Mammary epithelial cell (primary cell): ENCODE measurements at regions of chr9 and their contacts with region 1.

Region 1: DNA sequence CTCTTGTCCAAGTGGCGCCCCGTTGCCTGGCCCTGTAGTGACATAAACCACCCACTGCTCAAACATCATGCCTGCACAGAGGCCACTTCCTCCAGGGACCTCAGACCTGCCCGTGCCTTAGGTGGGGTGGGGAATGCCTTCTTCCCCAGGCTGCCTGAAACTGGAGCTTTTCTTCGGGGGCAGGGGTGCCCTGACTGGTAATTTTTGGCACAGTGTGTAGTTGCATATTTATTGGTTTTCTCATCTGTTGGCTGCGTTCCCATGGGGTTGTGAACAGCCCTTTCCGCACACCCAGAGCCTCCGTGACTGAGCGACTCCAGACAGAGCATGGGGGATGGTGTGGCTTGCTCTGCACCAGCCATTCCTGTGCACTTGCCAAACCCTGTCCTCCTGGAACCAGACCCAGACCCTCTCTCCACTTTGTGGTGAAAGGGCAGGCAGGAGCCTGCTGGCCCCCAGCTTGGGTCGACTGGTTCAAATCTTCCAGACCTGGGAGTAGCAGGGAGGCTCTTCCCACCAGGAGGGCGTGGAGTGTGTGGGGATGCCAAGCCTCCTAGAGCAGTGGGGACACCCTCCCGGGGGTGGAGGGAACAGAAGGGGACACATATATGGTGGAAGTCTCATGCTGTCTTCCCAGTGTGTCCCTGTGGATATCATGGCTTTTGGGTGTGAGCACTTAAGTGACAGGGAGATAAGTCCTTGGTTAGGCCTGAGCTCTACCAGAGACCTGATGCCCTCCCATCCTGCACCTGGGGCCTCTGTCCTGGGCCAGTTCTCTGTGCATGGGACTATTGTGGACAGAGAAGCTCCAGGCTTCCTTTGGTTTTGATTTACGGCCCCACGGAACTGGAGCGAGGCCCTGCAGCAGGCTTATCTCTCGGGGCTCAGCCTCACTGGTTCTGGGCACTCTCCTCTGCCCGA is 39.6 kb downstream of the WNK2 start:
- DNase-seq: peak; percentile 92
- H3K4me3 ChIP-seq: no peak overlapping the region
- H3K27ac ChIP-seq: no peak overlapping the region
- H3K4me1 ChIP-seq: peaks cover 27% of the 10 kb centered on the region
- H3K27me3 ChIP-seq: no peaks in the 10 kb centered on the region
- CTCF ChIP-seq: no peak

Region 2: GRCh38 chr9:93003552-93004407 is 219.7 kb before region 1 on chr9:
- CTCF ChIA-PET with region 1: no interaction called
- dilution Hi-C with region 1: no loop called
- in situ Hi-C with region 1: no loop called
- intact Hi-C with region 1: loop called (anchors 10 kb)
- DNase-seq: peak; percentile 42
- H3K4me3 ChIP-seq: no peak overlapping the region
- H3K27ac ChIP-seq: no peak overlapping the region
- H3K4me1 ChIP-seq: no peaks in the 10 kb centered on the region
- H3K27me3 ChIP-seq: no peaks in the 10 kb centered on the region
- CTCF ChIP-seq: peak; percentile 52 to 78

Region 3: DNA sequence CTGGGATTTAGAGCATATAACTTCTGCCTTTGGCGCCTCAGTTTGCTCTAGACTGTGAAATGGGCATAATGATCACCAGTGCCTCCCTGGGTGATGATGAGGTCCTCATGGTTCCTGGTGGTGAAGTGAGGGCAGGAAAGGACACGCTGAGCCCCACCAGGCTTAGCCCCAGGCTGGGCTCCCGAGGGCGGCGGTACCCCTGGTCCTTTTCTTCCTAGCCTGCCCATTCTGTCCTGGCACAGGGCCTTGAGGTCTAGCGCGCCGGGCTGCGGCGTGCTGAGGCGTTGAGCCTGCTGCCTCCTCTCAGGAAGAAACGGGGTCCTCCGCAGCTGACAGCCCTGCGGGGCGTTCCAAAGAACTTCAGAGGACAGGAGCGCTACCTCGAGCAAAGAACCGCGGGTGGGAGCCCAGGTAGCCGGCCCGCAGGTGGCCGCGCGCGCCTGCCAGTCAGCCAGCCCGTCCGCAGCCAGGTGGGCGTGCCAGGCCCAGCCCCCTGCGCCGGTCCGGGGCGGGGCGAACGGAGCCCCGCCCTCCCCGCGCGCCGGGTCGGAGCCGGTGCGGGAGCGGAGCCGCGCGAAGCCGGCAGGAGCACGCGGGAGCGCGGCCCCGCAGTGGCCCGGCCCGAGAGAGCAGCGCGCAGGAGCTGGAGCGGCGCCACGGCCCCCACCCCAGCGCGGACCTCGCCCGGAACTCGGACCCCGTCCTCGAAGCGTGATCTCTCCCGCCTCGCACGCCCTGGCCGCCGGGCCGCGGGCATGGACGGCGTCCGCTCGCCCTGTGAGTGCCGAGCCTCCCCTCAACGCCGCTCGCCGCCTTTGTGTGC is 39.7 kb before region 1 on chr9 and contains the start of gene WNK2:
- CTCF ChIA-PET with region 1: no interaction called
- dilution Hi-C with region 1: no loop called
- in situ Hi-C with region 1: no loop called
- intact Hi-C with region 1: loop called (anchors 5 kb)
- DNase-seq: no peak
- H3K4me3 ChIP-seq: peak within 1 kb of the TSS in 2 of 3 experiments; percentile 30 to 50
- H3K27ac ChIP-seq: no peak within 1 kb of the TSS
- H3K4me1 ChIP-seq: peaks cover 7% of the 10 kb centered on the region
- H3K27me3 ChIP-seq: peaks cover 24% of the 10 kb centered on the region
- CTCF ChIP-seq: no peak
- total RNA-seq, gene WNK2: 0.49 to 12.8 TPM